ENCODE measurements at regions of chr18 and their contacts with region 1.

Region 1: DNA sequence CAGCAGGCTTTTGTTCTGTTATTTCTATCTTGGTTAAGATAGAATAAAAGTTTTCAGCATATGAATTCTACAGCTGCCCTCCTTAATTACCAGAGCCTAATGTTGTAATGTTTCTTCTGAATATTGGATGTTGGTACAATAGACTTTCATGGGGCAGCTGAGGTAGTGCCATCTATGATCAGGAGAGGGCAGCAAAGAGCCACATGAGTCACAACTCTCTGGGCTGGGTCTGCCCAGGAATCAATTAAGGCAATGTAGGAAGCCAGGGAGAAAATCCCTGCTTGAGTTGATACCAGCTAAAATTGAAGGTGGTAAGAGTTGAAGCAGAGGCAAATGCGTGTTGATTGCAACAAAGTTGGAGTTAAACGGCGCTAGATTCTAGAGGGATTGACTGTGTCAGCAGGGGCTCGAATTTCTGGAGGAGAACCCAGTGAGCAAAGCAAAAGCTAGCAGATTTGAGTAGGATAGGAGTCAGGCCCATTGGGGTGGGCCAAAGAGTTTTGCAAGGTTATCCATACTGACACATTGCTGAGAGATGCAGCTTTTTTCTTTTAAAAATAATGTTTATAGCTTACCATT is 10.6 kb upstream of the MC5R start:
- DNase-seq: peak; percentile 69
- H3K4me3 Mint-ChIP-seq: no peak overlapping the region
- H3K27ac Mint-ChIP-seq: no peak overlapping the region
- H3K4me1 Mint-ChIP-seq: no peaks in the 10 kb centered on the region
- H3K27me3 Mint-ChIP-seq: no peaks in the 10 kb centered on the region

Region 2: DNA sequence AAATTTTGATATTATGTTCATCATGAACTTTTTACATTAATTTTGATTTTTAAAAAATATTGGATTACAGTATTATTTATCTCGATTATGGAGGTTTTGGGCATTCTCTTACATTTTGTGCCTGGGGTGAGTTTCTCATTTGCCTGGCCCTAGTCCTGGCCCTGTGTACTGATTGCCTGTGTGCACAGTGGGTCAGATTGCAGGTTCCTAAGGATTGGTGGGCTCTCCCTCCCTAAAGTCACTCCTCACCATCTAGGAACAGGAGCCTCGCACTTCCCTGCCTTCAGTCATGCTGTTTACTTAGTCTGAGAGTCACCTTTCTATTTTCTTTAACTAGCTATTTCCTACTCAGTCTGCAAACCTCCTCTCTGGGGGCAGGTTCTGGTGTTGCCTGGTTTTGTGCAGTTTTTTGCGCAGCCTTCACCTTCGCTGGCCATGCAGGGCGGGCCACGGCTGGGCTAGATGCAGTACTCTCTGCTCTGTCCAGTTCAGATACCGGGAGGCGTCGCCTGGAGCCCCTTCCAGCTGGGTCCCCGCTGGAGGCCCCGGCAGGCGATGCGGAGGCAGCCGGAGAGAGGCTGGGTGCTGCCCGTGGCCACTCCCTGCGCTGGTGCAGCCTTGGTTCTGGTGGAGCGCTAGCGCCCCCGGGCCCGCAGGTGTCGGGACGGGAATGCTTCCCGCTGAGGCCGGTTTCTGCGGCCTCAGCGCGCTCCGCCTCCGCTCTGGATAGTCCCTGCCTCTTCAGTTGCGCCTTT is 12.7 kb before region 1 on chr18:
- CTCF ChIA-PET with region 1: interaction called, 37 read pairs
- POLR2A ChIA-PET with region 1: no interaction called
- intact Hi-C with region 1: no loop called
- DNase-seq: peak; percentile 76
- H3K4me3 Mint-ChIP-seq: peak overlapping the region; percentile 1
- H3K27ac Mint-ChIP-seq: no peak overlapping the region
- H3K4me1 Mint-ChIP-seq: peaks cover 4% of the 10 kb centered on the region
- H3K27me3 Mint-ChIP-seq: peaks cover 58% of the 10 kb centered on the region

Region 3: DNA sequence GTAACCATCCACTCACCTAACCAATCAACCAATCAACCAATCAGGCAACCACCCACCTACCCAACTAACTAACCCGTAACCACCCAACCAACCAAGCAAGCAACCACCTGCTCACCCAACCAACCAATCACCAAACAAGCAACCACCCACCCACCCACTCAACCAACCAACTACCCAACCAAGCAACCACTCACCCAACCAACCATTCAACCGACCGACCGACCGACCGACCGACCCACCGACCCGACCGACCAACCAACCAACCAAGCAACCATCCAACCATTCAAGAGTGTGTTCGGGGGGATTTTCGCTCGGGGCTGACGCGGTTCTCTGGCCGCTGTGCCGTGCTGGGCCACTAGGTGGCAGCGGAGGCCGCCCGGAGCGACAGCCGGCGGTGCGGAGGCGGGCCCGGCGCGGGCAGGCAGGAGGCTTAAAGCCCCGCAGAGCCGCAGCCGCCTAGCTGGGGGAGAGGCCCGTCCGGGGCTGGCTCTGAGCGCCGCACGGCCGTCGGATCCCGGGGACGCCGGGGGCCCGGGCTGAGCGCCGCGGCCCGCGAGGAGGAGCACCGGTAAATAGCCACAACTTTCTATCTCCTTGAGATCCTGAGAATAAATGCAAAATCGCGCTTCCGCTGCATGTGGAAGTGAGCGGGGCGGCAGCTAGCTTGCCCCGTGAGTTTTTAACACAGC is 10.5 kb after region 1 on chr18 and contains the start of gene MC5R:
- CTCF ChIA-PET with region 1: interaction called, 51 read pairs
- POLR2A ChIA-PET with region 1: no interaction called
- intact Hi-C with region 1: no loop called
- DNase-seq: peak; percentile 80
- H3K4me3 Mint-ChIP-seq: no peak within 1 kb of the TSS
- H3K27ac Mint-ChIP-seq: no peak within 1 kb of the TSS
- H3K4me1 Mint-ChIP-seq: peaks cover 9% of the 10 kb centered on the region
- H3K27me3 Mint-ChIP-seq: peaks cover 20% of the 10 kb centered on the region
- total RNA-seq, gene MC5R: not detected

Region 4: DNA sequence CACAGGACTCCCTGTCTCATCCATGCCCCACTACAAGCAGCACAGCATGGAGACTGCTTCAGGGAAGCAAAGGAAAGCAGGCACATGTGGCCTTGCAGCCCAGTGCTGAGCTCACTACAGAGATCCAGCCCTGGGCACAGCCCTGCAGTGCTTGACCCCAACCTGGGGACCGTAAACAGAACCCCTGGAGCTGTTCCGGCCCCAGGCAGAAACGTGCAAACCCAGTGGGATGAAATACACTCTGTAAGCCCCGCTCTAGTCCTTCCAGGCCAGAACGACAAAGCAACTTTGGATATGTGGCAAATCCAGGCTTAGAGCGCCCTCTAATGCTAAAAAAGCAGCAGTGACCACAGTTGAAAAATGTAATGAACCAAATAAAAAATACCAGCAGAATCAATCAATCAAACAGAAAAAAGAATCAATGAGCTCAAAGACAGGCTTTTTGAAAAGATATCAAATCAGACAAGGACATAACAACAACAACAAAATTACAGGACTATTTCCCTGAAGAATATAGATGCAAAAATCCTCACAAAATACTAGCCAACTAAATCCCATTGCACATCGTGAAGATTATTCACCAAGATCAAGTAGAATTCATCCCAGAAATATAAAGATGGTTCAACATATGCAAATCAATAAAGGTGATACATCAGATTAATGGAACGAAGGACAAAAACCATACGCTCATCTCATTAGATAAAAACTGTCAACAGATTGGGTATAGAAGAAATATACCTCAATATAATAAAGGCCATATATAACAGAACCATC is 273.3 kb after region 1 on chr18:
- CTCF ChIA-PET with region 1: interaction called, 48 read pairs
- POLR2A ChIA-PET with region 1: no interaction called
- intact Hi-C with region 1: no loop called
- DNase-seq: no peak
- H3K4me3 Mint-ChIP-seq: no peak overlapping the region
- H3K27ac Mint-ChIP-seq: no peak overlapping the region
- H3K4me1 Mint-ChIP-seq: no peaks in the 10 kb centered on the region
- H3K27me3 Mint-ChIP-seq: no peaks in the 10 kb centered on the region